ENCODE measurements at regions of chr6 and their contacts with region 1.

Region 1: DNA sequence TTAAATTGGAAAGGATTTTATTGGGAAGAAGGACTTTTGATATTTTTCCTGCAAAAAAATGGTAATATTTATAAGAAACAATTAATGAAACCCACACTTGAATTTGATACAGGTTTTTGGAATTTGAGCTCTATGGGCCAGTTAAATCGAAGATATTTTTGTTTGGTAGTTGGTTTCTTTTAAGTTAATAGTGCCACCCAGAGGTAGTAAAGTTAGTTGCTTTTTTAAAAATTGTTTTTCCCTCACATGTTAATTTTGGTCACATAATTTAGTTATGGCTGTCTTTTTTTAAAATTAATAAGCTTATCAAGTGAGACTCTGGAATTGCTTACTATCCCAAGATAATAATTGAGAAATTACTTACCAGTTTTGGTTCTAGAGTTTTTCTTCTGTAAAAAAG is 7.1 kb downstream of the PRIM2 start:
- DNase-seq: no peak
- ATAC-seq: no peak
- H3K4me3 ChIP-seq: no peak overlapping the region
- H3K27ac ChIP-seq: no peak overlapping the region
- H3K4me1 ChIP-seq: no peaks in the 10 kb centered on the region
- H3K27me3 ChIP-seq: no peaks in the 10 kb centered on the region

Region 2: DNA sequence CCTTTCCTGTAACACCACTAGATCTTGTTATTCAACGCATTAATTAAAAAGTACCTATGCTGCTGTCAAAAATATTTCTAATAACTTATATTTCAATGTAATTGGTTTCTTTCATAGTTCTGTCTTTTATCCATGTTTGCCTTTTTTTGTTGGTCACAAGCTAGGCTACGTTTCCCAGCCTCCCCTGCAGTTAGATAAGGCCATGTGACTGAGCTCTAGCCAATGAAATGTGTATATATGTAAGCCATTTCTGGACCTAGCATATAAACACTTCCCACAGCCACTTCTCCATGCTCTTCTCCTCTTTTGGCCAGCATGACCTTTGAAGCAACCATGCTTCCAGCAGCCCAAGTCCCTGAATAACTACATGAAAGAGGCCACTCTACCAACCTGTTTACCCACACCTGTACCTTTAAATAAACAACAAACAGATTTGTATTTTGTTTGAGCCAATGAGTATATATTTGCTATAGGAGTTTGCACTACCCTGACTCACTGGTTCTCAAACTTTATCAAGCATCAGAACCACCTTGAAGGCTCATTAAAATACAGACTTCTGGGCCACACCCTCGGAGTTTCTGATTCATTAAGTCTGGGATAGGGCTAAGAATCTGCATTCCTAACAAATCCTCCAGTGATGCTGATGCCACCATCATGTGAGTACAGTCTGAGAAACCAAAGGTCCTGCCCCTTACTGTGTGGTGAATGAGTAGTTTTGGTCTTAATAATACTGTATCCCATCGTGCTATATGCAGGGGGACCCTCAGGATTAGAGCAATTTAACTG is 415.2 kb before region 1 on chr6:
- intact Hi-C with region 1: loop called (anchors 2 to 5 kb)
- DNase-seq: no peak
- ATAC-seq: no peak
- H3K4me3 ChIP-seq: no peak overlapping the region
- H3K27ac ChIP-seq: no peak overlapping the region
- H3K4me1 ChIP-seq: no peaks in the 10 kb centered on the region
- H3K27me3 ChIP-seq: no peaks in the 10 kb centered on the region

Measured in aorta (tissue), 5 donors.